ENCODE measurements at regions of chr3 and their contacts with region 1.

Region 1: DNA sequence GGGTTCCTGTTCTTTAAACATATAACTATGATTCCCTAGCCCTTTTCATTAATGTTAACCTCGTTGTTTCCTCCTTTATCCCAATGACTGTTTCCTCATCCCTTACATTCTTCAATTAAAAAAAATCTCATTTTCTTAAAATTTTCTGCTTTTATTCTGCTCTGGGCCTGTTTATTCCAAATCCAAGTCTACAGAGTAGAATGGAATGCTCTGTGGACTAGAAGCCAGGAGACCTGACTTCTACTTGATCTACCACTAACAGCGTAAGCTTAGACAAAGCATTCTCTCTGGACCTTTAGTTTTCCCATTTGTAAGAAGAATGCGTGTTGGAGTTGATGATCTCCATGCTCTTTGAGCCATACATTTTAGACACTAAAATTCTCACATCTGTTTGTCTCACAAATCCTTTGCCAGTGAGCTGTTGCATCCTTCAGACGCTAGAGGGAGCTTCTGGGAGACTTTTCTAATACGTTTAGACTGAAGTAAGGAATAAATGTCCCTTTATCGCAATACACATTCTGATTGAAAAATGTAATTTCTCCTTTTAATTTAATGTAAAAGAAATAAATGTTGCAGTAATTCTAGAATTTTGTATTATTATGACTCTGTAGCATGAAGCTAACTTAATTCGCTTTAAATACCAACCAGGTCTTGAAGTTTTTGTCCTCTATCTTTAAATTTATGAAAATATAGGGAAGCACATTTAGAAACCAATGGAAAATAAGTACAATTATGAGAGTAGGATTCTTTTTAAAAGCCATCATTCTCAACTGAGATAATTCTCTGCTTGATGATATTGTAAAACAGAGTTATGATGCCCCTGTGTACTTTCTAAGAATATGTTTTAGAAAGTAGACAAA is 21.7 kb upstream of the GMNC start:
- DNase-seq: peak; percentile 51
- ATAC-seq: peak; percentile 41
- H3K4me3 ChIP-seq: no peak overlapping the region
- H3K4me3 Mint-ChIP-seq: no peak overlapping the region
- H3K27ac ChIP-seq: no peak overlapping the region
- H3K27ac Mint-ChIP-seq: no peak overlapping the region
- H3K4me1 ChIP-seq: no peaks in the 10 kb centered on the region
- H3K4me1 Mint-ChIP-seq: no peaks in the 10 kb centered on the region
- H3K27me3 ChIP-seq: no peaks in the 10 kb centered on the region
- H3K27me3 Mint-ChIP-seq: peaks cover 10% of the 10 kb centered on the region
- CTCF ChIP-seq: peak; percentile 98

Region 2: GRCh38 chr3:191051037-191051436 is 166.8 kb after region 1 on chr3:
- CTCF ChIA-PET with region 1: interaction called, 13 read pairs
- POLR2A ChIA-PET with region 1: no interaction called
- intact Hi-C with region 1: no loop called
- DNase-seq: peak; percentile 8
- ATAC-seq: no peak
- H3K4me3 ChIP-seq: no peak overlapping the region
- H3K4me3 Mint-ChIP-seq: no peak overlapping the region
- H3K27ac ChIP-seq: no peak overlapping the region
- H3K27ac Mint-ChIP-seq: no peak overlapping the region
- H3K4me1 ChIP-seq: no peaks in the 10 kb centered on the region
- H3K4me1 Mint-ChIP-seq: no peaks in the 10 kb centered on the region
- H3K27me3 ChIP-seq: peaks cover 0 to 7% (median 0%) of the 10 kb centered on the region in 4 experiments
- H3K27me3 Mint-ChIP-seq: peaks cover 15% of the 10 kb centered on the region
- CTCF ChIP-seq: peak; percentile 55

Region 3: DNA sequence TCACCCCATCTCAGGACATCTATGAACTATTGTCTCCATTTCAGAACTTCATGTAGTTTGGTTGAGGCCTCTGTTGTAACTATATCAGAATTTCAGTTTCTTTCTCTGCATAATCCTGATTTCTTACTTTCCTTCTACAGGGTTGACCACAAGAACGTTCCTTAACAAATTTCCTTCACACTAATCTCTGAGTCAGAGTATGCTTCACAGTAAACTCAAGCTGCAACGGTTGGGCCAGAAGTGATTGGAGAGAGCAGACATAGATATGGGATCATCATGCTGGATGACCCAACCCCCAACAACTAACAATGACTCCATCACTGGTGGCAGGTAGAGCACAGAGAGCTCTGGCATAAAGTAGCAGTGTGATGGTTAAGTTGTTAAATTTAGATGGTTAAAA is 186.0 kb after region 1 on chr3:
- CTCF ChIA-PET with region 1: no interaction called
- POLR2A ChIA-PET with region 1: no interaction called
- intact Hi-C with region 1: no loop called
- DNase-seq: no peak
- ATAC-seq: no peak
- H3K4me3 ChIP-seq: no peak overlapping the region
- H3K4me3 Mint-ChIP-seq: no peak overlapping the region
- H3K27ac ChIP-seq: no peak overlapping the region
- H3K27ac Mint-ChIP-seq: no peak overlapping the region
- H3K4me1 ChIP-seq: no peaks in the 10 kb centered on the region
- H3K4me1 Mint-ChIP-seq: no peaks in the 10 kb centered on the region
- H3K27me3 ChIP-seq: peaks cover 0 to 5% (median 0%) of the 10 kb centered on the region in 4 experiments
- H3K27me3 Mint-ChIP-seq: peaks cover 13% of the 10 kb centered on the region
- CTCF ChIP-seq: no peak

Region 4: GRCh38 chr3:191388823-191389222 is 504.6 kb after region 1 on chr3:
- CTCF ChIA-PET with region 1: no interaction called
- POLR2A ChIA-PET with region 1: no interaction called
- intact Hi-C with region 1: loop called (anchors 5 kb)
- DNase-seq: peak; percentile 23
- ATAC-seq: no peak
- H3K4me3 ChIP-seq: no peak overlapping the region
- H3K4me3 Mint-ChIP-seq: no peak overlapping the region
- H3K27ac ChIP-seq: no peak overlapping the region
- H3K27ac Mint-ChIP-seq: no peak overlapping the region
- H3K4me1 ChIP-seq: no peaks in the 10 kb centered on the region
- H3K4me1 Mint-ChIP-seq: peaks cover 15% of the 10 kb centered on the region
- H3K27me3 ChIP-seq: no peaks in the 10 kb centered on the region
- H3K27me3 Mint-ChIP-seq: no peaks in the 10 kb centered on the region
- CTCF ChIP-seq: peak; percentile 69

Region 5: GRCh38 chr3:191412759-191413158 is 528.6 kb after region 1 on chr3:
- CTCF ChIA-PET with region 1: no interaction called
- POLR2A ChIA-PET with region 1: no interaction called
- intact Hi-C with region 1: loop called (anchors 10 kb)
- DNase-seq: no peak
- ATAC-seq: no peak
- H3K4me3 ChIP-seq: no peak overlapping the region
- H3K4me3 Mint-ChIP-seq: no peak overlapping the region
- H3K27ac ChIP-seq: no peak overlapping the region
- H3K27ac Mint-ChIP-seq: no peak overlapping the region
- H3K4me1 ChIP-seq: peaks cover 0 to 3% of the 10 kb centered on the region in 2 donors
- H3K4me1 Mint-ChIP-seq: peaks cover 10% of the 10 kb centered on the region
- H3K27me3 ChIP-seq: no peaks in the 10 kb centered on the region
- H3K27me3 Mint-ChIP-seq: no peaks in the 10 kb centered on the region
- CTCF ChIP-seq: no peak

Measured in B cell (primary cell).